HEK293T (cell line): ENCODE measurements at regions of chr1 and their contacts with region 1.

Region 1: GRCh38 chr1:236416165-236416564 is 22.1 kb downstream of the EDARADD start:
- DNase-seq: no peak

Region 2: DNA sequence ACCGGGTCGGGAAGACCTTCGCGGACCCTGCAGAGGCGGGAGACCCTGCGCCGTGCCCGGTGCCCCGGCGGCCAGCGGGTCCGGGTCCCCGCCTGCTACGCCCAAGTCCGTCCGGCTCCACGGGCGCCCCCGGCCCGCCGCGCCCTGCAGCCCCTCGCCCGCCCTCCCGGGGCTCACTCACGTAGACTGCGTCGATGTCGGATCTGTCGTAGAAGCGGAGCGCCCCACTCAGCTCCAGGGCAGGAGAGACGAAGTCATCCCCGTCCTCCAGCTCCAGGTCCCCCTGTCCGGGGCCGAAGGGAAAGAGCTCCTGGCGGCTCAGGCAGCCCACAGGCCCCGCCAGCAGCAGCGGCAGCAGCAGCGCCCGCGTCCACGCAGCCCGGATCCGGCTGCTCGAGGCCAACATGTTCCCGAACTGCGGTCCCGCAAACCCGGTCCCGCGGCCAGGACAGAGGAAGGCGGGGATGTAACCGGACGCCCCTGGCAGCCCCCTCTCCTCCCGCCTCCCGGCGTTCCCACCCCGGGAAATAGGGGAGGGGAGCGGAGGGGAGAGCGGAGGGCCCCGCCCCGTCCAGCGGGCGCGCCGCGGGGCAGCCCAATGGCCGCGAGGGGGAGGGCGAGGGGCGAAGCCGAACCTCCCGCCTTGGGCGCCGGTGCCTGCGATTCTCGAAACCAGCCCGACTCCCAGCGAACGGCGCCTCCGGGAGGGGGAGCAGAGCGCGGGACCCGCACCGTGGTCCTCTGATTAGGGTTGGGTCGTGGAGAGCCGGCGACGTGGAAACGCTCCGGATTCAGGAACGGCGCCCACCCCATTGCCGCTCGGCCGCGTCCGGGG is 351.3 kb before region 1 on chr1 and contains the start of gene NID1:
- CTCF ChIA-PET with region 1: no interaction called
- POLR2A ChIA-PET with region 1: no interaction called
- DNase-seq: peak; percentile 90

Region 3: DNA sequence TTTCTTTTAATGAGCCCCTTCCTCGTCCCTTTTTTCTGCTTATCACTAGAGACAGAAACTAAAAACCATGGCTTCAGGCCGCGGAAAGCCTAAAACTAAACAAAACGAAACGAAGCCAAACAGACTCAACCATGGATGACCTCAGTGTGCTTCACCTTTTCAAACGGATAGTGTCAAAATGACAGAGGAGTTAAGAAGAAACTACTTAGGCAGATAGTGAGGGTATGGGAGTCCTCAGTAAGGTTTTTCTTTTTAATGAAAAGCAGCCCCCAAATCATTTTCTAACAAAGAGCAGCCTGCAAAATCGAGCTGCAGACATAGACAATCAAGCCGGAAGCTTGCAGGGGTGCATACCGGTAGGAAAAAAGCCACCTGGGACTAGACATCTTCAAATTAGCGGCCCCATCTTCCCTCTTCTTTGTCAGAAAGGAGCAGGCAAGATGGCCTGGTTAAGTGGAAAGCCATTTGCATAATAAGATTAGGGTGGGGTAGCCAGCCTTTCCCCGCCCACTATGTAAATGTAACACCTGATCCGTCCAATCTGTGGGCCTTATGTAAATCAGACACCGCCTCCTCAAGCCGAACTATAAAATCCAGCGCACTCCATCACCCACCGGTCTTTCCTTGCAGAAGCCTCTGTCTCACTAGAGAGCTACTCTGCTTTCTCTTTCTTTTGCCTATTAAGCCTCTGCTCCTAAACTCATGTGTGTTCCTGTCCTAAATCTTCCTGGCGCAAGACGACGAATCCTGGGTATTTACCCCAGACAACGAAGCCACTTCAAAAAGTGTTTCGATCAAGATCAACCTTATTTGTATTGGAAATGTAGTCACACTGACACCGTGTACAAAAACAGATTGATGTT is 128.2 kb before region 1 on chr1:
- CTCF ChIA-PET with region 1: no interaction called
- POLR2A ChIA-PET with region 1: no interaction called
- DNase-seq: peak; percentile 66

Region 4: DNA sequence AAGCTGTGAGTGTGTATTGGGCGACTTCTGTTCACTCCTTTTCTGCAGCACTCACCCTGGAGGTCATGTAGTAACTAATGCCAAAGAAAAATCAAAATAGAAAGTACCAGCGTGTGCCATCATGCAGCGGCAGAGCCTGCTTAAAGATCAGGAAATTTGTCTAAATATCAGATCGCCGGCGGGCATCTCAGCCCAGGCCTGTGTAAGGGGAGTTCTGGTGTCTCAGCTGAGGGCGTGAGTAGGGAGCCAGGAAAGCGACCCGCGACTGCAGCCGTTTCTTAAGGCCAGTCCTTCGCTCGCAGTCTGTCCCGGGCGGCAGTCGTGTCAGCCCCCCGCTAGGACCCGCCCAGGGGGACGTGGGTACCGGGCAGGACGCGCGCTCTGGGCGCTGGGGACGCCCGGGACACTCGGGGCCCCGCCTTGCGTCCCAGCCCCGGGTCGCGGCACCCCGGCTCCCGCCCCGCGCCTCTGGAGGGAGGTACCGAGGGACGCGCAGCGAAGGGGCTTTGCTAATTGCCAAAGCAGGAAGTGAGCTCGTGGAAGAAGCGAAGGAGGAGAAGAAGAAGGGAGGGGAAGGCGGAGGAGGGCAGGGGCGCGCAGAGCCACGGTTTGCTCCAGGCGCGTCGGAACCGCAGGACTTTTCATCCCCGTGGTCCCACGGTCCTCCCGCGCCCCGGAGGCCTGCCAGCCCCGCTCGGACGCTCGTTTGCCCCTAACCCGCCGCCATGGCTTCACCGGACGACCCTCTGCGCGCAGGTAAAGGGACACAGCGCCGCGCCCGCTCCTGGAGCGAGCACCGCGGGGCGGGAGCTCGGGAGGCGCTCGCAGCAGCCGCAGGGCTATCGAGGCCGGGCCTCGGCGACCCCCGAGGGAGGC is 21.0 kb before region 1 on chr1:
- CTCF ChIA-PET with region 1: no interaction called
- POLR2A ChIA-PET with region 1: interaction called, 13 read pairs
- DNase-seq: peak; percentile 70

Region 5: DNA sequence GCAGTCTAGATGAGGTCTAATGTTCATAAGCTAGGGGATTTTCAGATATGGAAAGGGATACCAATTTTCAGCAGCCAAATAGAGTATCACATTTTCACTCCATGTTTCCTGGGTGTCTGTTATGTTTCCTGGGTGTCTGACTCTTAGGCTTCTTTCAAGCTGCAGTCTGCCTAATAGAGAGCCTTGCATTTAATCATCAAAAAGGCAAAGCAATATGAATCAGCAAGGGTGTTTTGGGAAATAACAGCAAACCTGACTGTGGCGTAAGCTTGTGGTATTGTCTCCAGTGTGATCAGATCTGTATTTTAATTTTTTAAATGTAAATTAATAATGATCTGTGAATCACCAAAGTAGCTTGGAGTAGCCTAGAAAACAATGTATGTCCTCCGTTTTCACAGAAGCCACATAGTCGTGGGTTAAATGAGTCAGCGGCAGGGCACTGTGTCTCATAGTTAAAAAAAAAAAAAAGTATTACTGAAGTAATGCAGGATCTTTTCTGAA is 118.0 kb after region 1 on chr1:
- CTCF ChIA-PET with region 1: no interaction called
- POLR2A ChIA-PET with region 1: no interaction called
- DNase-seq: no peak